ENCODE measurements at regions of chr5 and their contacts with region 1.

Region 1: DNA sequence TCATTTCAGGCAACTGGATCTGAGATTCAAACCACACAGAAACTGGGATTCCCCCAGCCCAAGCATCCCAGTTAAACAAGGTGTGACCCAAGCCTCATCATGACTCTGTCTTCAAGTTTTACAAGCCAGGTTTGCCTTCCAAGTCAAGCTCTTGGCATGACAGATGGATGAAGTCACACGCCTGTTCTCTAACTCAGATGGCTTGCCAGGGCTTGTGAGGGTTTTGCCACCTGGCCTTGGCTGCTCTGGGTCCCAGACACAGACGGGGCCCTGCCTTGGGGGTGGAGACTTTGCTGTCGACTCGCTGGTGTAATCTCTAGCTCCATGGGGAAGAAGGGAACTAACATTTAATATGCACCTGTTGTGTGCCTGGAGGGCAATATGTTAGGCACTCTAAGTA is 95.8 kb upstream of the RARS1 start:
- DNase-seq: no peak

Region 2: DNA sequence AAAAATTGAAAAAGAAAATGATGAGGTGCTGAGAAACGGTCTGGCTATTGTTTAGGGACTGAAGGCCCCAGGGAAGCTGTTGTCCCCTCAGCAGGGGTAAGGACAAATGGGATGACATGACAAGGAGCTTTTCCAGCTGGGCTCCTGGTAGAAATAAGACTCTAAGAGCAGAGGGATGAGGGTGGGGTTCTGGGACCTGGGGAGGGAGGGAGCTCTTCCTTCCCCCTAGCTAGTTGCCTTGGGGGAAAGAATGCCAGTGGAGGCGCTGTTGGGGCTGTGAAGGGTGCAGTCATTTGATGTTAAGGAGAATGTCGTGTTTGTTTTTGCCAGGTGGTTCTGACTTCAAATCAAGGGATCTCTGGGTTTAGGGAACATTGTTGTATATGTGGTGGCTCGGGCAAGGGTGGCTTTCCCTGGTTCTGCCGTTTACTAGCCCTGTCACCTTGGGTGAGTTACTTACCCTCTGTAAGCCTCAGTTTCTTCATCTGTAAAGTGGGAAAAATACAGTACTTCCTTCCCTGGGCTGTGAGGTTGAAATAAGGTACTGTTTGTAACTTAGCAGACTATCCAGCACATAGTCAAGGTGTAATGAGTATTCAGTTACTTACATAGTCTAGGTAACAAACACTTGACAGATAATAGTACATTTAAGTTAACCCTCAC is 51.3 kb before region 1 on chr5:
- intact Hi-C with region 1: loop called in 1 of 2 experiments (anchors 2 kb)
- DNase-seq: no peak

Region 3: DNA sequence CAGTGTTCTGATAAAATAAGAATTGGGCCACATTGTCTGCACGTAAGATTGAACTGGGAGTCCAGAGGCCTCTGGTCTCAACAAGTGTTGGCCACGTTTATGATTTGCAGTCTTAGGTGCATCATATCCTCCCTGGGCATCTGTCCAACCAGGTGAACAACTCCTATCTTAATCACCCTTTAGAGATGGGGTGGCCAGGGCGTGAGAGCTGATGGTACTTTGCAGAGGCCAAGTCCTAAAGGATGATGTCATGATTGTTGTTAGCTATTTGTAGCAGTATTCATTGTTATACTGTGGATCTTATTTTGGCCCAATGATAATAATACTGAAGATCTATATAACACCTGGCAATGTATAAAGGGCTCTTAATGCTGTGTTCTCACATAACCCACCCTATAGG is 22.6 kb after region 1 on chr5:
- intact Hi-C with region 1: loop called in 1 of 2 experiments (anchors 2 kb)
- DNase-seq: no peak

Region 4: DNA sequence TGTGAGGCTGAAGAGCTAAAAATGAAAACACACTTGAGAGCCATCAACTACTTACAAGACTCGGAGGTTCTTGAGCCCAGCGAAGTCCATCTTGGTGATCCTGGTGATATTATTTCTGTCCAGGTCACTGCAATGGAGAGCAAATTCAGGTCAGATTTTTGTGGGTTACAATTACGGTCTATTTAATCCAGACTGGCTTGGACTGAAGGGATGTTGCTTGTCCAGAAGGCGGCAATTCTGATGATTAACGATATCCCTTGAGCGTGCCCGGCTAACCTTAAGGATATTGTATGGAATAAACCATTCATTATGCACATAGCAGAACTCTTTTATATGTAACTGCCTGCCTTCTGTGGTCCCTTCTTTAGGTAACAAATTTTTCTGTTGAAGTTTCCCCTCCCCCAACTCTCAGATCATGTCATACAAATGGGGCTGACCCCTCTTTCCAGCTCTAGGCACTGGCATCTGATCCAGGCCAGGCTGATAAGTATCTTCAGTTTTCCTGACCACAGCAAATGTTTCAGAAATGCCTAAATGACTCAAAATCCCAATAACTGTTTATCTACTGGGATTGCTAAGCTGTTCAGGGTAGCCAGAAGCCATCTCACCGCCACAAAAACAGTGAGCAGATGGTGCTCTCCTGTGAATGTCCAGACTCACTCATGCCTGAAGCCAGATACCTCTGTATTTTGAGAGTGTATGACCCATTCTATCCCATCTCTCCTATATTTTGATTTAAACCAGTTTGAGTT is 861.0 kb after region 1 on chr5:
- intact Hi-C with region 1: no loop called
- DNase-seq: no peak

Measured in posterior vena cava (tissue), 2 donors.